Activated naive CD4-positive, alpha-beta T cell treated with anti-CD3 and anti-CD28 coated beads for 36 hours (primary cell): ENCODE measurements at regions of chr15 and their contacts with region 1.

Region 1: GRCh38 chr15:40941528-40942336 is 11.5 kb upstream of the CHAC1 start:
- DNase-seq: peak; percentile 80
- H3K4me3 Mint-ChIP-seq: peak overlapping the region; percentile 82
- H3K27ac Mint-ChIP-seq: peak overlapping the region; percentile 78
- H3K4me1 Mint-ChIP-seq: peaks cover 32% of the 10 kb centered on the region
- H3K27me3 Mint-ChIP-seq: no peaks in the 10 kb centered on the region

Region 2: DNA sequence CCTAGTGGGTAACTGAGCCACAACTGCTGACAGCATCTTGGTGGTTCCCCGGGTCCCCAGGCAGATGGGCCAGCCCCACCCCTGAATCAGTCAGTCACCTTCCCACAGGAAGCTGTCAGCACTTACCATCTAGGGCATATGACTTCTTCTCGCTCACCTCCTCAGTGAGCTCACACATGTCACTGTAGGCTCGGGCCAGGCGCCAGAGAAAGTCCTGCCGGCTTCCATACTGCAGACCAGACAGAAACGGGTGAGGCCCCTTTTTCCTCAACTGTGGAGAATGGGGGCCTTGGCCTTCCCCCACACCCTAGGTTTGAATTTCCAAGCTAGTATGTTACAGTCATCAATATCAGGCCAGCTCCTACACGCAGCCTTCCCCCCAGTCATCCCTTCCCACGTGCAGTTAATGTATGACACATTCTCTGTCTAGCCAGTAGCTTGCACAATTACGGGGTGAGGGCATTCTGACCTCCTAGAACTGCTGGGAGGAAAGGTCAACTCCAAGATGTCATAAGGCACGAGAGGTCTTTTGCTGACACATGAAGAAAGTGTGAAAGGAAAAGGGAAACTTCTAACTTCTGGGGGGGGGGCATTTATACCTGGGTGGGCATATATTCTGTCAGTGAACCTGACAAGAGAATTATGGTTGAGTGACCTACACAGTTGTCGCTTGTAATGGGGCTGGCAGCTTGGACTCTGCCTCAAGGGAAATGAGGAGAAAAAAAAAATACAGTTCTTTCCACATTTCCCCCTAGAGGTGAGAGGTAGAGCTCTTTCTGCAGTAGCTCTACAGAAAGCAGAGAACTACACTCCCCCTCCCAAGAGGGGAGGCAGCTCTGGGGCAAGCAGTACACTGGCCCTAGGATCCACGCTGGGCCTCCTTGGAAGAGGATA is 197.6 kb before region 1 on chr15:
- CTCF ChIA-PET with region 1: no interaction called
- intact Hi-C with region 1: no loop called
- DNase-seq: peak; percentile 81
- H3K4me3 Mint-ChIP-seq: no peak overlapping the region
- H3K27ac Mint-ChIP-seq: peak overlapping the region; percentile 48
- H3K4me1 Mint-ChIP-seq: peaks cover 15% of the 10 kb centered on the region
- H3K27me3 Mint-ChIP-seq: no peaks in the 10 kb centered on the region

Region 3: GRCh38 chr15:40928821-40929659 is 12.7 kb before region 1 on chr15 and contains the start of gene DLL4:
- CTCF ChIA-PET with region 1: interaction called, 43 read pairs
- intact Hi-C with region 1: loop called (anchors 1 kb)
- DNase-seq: peak; percentile 35
- H3K4me3 Mint-ChIP-seq: peak within 1 kb of the TSS; percentile 54
- H3K27ac Mint-ChIP-seq: no peak within 1 kb of the TSS
- H3K4me1 Mint-ChIP-seq: peaks cover 40% of the 10 kb centered on the region
- H3K27me3 Mint-ChIP-seq: peaks cover 66% of the 10 kb centered on the region
- total RNA-seq, gene DLL4: 0.14 TPM in 1 of 2 experiments, not detected in the other

Region 4: GRCh38 chr15:41022487-41023090 is 80.9 kb after region 1 on chr15:
- CTCF ChIA-PET with region 1: interaction called, 7 read pairs
- intact Hi-C with region 1: loop called (anchors 5 kb)
- DNase-seq: peak; percentile 56
- H3K4me3 Mint-ChIP-seq: no peak overlapping the region
- H3K27ac Mint-ChIP-seq: no peak overlapping the region
- H3K4me1 Mint-ChIP-seq: no peaks in the 10 kb centered on the region
- H3K27me3 Mint-ChIP-seq: no peaks in the 10 kb centered on the region